ENCODE measurements at regions of chr2 and their contacts with region 1.

Region 1: DNA sequence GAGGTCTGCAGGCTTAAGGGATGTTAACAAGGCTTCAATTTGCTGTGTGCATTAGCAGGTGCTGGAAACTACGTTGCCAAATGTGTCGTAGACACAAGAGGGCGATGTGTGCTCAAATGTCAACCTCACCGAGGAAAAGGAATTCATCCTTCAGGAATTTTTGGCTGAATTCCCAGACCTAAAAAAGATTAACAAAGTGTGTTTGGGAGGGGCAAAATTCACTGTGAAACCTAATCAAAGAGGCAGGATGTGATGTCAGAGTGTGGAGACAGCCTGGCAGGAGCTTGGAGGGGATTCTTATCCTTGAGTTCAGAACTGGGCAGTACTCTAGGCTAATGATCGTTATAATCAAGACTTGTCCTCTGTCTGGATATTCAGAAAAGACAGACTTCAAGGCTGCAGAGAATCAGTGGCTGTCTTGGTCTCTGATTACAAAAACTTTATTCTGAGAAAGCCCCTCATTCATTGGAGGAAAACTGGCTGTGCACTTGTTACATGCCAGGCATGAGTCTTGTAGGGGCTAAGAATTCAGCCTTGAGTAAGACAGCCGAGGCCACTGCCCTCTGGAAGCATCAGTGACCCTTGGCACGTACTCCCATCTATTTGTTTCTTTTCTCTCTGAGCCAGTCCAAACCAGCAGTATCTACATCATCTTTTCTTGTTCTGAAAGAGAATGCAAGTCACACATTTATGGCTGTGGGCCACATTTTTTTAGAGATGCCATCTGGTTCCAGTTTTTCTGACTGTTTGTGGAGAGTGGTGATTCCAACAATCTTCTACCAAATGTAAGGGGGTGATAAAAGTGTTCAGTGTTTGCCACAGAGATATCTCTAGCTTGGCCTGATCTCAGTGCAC is 18.7 kb upstream of the SCYGR1 start:
- DNase-seq: peak; percentile 61 to 80 (median 62)
- ATAC-seq: peak; percentile 94 to 97
- H3K4me3 ChIP-seq: no peak overlapping the region
- H3K27ac ChIP-seq: peak overlapping the region; percentile 89
- H3K4me1 ChIP-seq: peaks cover 2% of the 10 kb centered on the region
- H3K27me3 ChIP-seq: no peaks in the 10 kb centered on the region

Region 2: DNA sequence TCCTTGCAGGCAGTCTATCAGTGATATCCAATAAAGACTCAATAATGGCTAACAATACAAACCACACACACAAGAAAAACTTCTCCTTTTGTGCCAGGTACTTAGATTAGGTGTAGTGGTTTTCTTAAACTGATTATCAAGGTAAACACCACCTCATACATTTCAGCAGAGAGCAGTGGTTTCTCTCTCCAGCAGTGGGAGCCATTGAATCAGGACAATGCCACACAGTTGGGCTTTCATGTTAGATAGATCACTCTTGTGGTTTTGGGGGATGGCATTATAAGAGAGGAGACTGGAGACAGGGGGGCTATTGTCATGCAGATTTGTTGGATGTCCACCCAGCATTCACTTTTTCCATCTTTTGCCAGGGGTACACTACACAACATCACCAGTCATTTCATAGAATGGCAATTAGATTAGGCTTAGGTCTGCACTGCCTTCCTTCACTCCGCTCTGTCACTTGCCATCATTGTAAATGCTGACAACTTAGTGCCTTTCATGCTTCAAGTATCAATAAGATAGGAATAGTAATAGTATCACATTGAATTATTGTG is 593.2 kb before region 1 on chr2:
- intact Hi-C with region 1: no loop called
- DNase-seq: no peak
- ATAC-seq: no peak
- H3K4me3 ChIP-seq: no peak overlapping the region
- H3K27ac ChIP-seq: no peak overlapping the region
- H3K4me1 ChIP-seq: no peaks in the 10 kb centered on the region
- H3K27me3 ChIP-seq: no peaks in the 10 kb centered on the region

Region 3: GRCh38 chr2:227450926-227451654 is 44.7 kb after region 1 on chr2:
- intact Hi-C with region 1: no loop called
- DNase-seq: no peak
- ATAC-seq: peak; percentile 94 to 96
- H3K4me3 ChIP-seq: no peak overlapping the region
- H3K27ac ChIP-seq: peak overlapping the region; percentile 16
- H3K4me1 ChIP-seq: peaks cover 1% of the 10 kb centered on the region
- H3K27me3 ChIP-seq: no peaks in the 10 kb centered on the region

Region 4: GRCh38 chr2:227471924-227472264 is 65.5 kb after region 1 on chr2 and contains the start of gene AGFG1:
- intact Hi-C with region 1: loop called in 2 of 4 experiments (anchors 10 kb)
- DNase-seq: peak; percentile 84 to 94 (median 93)
- ATAC-seq: peak; percentile 89 to 90
- H3K4me3 ChIP-seq: peak within 1 kb of the TSS; percentile 99
- H3K27ac ChIP-seq: peak within 1 kb of the TSS; percentile 87
- H3K4me1 ChIP-seq: peaks cover 2% of the 10 kb centered on the region
- H3K27me3 ChIP-seq: no peaks in the 10 kb centered on the region
- total RNA-seq, gene AGFG1: 41.2 to 65.3 (median 50.4) TPM

Region 5: DNA sequence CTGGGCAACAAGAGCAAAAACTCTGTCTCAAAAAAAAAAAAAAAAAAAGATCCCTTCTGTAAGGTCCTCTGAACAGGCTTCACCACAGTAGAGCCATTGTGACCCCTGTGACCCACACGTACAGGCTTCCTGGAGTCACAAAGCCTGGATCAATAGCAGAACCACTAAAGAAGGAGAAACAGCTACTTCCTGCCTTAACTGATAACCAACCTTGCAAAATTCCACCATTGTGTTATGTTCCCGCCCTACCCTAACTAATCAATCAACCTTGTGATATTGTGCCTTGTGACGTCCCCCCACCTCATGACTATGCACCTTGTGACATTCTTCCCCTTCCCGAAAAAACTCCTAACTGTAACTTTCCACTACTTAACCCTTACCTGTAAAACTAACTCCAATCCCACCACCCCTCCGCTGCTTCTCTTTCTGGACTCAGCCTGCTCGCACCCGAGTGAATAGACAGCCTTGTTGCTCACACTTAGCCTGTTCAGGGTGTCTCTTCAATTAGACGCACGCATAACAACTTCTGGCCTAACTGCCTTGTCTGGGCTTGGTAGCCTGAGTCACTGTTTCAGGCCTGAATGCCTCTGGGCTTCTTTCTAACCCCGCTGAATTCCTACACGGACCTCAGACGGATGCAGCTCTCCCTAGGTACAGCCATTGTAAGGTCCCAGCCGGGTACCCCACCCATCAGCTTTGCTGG is 353.2 kb after region 1 on chr2:
- intact Hi-C with region 1: loop called in 1 of 4 experiments (anchors 10 kb)
- DNase-seq: no peak
- ATAC-seq: no peak
- H3K4me3 ChIP-seq: no peak overlapping the region
- H3K27ac ChIP-seq: no peak overlapping the region
- H3K4me1 ChIP-seq: no peaks in the 10 kb centered on the region
- H3K27me3 ChIP-seq: no peaks in the 10 kb centered on the region

Region 6: DNA sequence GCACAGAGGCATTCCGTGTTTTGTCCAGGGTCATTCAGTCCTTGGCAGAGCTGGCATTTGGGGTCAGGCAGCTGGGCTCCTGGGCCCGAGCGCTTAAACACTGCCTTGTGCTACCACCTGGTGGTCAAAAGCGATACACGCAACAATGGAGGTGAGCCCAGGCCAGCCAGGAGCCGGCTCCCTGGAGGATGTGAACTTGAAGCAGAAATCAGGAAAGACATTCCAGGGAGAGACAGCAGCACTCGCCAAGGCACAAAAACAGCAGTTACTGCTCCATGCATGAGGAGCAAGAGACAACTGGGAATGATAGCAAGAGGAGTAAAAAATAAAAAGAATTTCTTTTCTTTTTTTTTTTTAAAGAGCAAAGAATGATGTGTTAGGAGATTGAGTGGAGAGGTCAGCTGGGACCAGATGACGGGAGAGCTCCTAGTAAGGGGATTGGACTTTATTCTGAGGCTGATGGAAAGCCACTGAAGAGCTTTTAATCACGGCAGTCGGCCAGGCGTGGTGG is 360.0 kb after region 1 on chr2:
- intact Hi-C with region 1: loop called in 3 of 4 experiments (anchors 5 kb)
- DNase-seq: peak; percentile 81 to 92 (median 87)
- ATAC-seq: peak; percentile 98 to 99
- H3K4me3 ChIP-seq: no peak overlapping the region
- H3K27ac ChIP-seq: no peak overlapping the region
- H3K4me1 ChIP-seq: no peaks in the 10 kb centered on the region
- H3K27me3 ChIP-seq: no peaks in the 10 kb centered on the region